ENCODE measurements at regions of chr2 and their contacts with region 1.

Region 1: DNA sequence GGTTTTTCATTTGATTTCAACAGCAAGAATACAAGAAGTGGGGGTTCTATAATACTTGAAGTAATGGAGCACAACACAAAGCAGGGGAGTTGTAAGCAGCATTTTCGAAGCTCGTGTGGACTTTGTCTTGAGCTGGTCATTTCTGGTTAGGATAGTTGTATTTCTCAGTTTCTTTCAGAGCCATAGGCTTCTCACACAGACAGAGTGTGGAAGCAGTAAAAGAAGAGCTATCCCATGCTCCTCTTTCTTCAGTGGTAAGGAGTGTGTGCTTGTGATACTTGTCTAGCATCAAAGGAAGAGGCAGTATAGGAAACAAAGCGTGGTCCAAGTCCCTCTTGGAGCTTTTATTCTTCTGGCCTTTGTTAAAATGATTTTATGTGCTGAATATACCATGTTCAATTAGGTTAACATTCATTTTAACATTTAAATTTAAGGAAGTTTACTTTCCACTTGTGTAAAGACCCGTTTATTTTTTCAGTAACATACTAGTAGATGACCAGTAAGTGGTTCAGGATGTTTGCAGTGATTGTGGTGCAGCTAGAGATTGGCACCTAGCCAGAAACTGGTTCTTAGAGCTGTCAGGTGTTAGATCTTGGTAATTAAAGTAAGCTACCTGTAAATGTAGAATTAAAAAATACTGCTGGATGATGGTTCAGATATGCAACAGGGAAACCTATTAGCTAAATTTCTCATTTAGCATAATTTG is 14.6 kb downstream of the CCNYL1 start:
- H3K4me3 Mint-ChIP-seq: no peak overlapping the region
- H3K27ac Mint-ChIP-seq: no peak overlapping the region
- H3K4me1 Mint-ChIP-seq: peaks cover 10% of the 10 kb centered on the region
- H3K27me3 Mint-ChIP-seq: no peaks in the 10 kb centered on the region

Region 2: GRCh38 chr2:207238831-207239701 is 487.0 kb before region 1 on chr2:
- intact Hi-C with region 1: no loop called
- H3K4me3 Mint-ChIP-seq: no peak overlapping the region
- H3K27ac Mint-ChIP-seq: no peak overlapping the region
- H3K4me1 Mint-ChIP-seq: peaks cover 13% of the 10 kb centered on the region
- H3K27me3 Mint-ChIP-seq: peaks cover 3% of the 10 kb centered on the region

Region 3: DNA sequence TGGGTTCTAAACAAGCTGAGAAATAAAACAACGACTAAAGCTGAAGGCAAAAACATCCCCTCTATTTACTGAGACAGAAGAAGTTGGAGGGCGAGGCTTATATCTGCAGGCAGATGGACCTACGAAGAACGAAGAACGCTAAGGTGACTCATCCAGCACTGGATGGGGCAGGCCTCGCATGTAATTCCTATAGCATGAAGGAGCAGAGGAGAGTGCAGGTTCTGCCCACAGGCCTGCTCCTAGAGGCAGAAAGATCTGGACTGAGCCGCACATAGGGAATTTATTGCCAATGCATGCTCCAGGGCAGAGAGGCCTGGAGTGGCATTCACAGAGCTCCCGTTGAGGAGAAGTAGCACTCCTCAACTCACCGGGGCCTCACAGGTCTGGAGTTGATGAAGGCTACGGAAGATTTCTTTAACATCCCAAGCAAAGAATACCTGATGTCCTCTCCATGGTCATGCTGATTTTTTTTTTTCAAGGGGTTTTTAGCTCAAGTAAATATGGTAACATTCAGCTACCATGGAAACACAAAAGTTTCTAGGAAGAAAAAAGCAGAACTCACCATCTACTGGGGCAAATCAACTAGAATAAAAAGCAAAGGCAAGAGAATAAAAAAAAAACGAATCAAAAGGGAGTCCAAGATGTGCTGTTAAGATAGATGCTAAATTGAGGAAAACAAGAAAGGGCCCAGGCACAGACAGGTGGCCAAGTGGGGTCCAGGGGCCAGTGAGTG is 90.4 kb before region 1 on chr2:
- intact Hi-C with region 1: loop called (anchors 5 kb)
- H3K4me3 Mint-ChIP-seq: peak overlapping the region; percentile 35
- H3K27ac Mint-ChIP-seq: peak overlapping the region; percentile 90
- H3K4me1 Mint-ChIP-seq: peaks cover 43% of the 10 kb centered on the region
- H3K27me3 Mint-ChIP-seq: no peaks in the 10 kb centered on the region